Prostate gland (tissue), 2 donors: ENCODE measurements at regions of chr20 and their contacts with region 1.

Region 1: DNA sequence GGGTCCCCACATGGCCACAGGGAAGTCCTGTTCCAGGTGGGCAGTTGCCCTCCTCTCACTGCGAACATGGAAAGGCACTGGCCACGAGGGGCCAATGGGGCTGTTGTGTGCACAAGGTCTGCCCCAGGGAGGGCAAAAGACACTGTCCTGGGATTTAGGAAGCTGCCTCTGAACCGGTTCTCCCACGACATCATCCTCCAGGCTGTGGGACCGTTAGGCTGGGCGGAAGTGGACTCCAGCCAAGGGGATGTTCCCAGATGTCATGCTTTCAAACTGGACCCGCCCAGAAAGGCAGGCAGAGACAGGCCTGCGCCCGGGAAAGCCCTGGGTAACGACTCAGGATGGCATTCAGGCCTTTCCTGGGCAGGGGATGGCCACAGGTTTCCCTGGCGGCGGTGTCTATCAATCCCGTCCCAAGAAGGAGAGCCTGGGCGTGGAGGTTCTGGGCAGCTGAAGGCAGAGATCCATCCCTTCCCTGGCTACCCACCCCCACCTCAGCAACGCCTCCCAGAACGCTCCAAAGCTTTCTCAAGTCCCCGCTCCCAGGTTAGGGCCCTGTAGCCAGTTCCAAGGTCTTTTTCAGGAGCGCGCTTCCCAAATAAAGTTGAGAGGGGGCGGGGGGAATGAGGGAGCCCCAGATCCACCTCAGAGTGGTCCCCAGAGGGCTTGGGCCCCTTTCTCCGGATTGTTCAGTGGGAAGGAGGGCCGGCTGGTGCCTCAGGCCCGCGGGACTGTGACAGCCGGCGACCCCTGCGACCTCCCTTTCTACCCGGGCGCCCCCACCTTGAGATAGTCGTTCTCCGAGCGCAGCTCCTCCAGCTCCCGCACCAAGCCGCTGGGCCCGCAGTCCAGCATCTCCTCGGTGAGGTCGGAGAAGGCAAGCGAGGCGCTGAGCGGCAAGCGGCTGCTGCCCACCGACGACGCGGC is 13.8 kb upstream of the TLDC2 start:
- DNase-seq: peak; percentile 98
- H3K4me3 ChIP-seq: peak overlapping the region; percentile 58 to 64
- H3K27ac ChIP-seq: peak overlapping the region; percentile 93 to 95
- H3K4me1 ChIP-seq: peaks cover 14% of the 10 kb centered on the region
- H3K27me3 ChIP-seq: no peaks in the 10 kb centered on the region
- CTCF ChIP-seq: peak in 1 of 4 experiments; percentile 23
- POLR2A ChIP-seq: peak; percentile 66

Region 2: GRCh38 chr20:36573103-36573794 is 288.9 kb before region 1 on chr20 and contains the start of gene TGIF2:
- intact Hi-C with region 1: loop called (anchors 10 kb)
- DNase-seq: peak; percentile 81
- H3K4me3 ChIP-seq: peak within 1 kb of the TSS; percentile 75 to 88
- H3K27ac ChIP-seq: peak within 1 kb of the TSS; percentile 92 to 94
- H3K4me1 ChIP-seq: peaks cover 2% of the 10 kb centered on the region
- H3K27me3 ChIP-seq: no peaks in the 10 kb centered on the region
- CTCF ChIP-seq: no peak
- POLR2A ChIP-seq: peak; percentile 70
- total RNA-seq, gene TGIF2: 16.7 to 34.8 TPM

Region 3: DNA sequence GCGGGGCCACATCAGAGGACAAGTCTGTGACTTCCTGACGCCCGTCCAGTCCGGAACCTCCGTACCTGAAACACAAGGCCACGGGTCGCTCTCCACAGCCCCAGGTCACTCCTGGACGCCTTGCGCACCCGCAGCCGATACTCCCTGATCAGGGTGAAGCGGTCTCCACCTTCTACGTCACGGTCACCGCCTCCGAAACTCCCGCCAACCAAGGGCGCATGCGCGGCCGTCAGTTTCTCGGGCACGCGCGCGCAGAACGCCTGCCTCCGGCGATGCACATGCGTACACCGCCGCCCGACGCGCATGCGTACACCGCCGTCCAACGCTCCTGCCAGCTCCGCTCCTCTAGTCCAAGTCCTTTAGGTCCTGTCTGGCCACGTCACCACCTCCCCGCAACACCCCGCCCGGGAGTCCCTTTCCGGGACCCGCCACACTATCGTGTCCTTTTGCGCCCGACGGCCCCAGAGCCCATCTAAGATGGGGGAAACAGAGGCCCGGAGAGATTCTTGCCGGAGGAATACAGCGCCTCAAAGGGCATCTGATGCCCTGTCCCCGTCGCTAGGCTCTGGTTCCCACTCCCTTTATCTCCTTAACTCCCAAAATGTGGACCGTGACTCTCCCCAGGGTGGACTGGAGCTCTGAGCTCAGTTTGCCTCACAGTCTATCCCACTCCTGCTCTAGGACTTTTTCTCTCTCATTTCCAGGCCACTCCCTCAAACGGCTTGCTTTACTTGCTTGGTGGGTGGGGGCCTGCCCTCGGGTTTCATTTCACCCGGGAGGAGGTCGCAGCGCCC is 88.3 kb before region 1 on chr20 and contains the start of gene DSN1:
- intact Hi-C with region 1: loop called (anchors 5 kb)
- DNase-seq: peak; percentile 95
- H3K4me3 ChIP-seq: peak within 1 kb of the TSS; percentile 67 to 82
- H3K27ac ChIP-seq: peak within 1 kb of the TSS; percentile 94 to 97
- H3K4me1 ChIP-seq: peaks cover 8% of the 10 kb centered on the region
- H3K27me3 ChIP-seq: no peaks in the 10 kb centered on the region
- CTCF ChIP-seq: peak in 2 of 4 experiments; percentile 11 to 47
- POLR2A ChIP-seq: peak; percentile 81
- total RNA-seq, gene DSN1: 13.0 to 17.1 TPM

Region 4: DNA sequence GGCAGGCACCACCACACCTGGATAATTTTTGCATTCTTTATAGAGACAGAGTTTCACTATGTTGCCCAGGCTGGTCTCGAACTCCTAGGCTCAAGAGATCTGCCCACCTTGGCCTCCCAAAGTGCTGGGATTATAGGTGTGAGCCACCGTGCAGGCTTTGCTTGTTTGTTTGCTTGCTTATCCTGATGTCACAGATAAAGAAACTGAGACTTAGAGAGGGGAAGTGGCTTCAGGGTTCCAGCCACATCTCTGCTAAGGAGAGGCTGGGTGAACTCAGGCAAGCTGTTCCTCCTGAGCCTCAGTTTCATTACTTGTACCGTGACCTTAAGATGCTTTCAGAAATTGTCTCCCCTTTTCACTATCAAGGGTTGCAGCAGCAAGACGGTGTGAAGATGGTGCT is 34.7 kb before region 1 on chr20:
- intact Hi-C with region 1: loop called (anchors 5 kb)
- DNase-seq: no peak
- H3K4me3 ChIP-seq: no peak overlapping the region
- H3K27ac ChIP-seq: no peak overlapping the region
- H3K4me1 ChIP-seq: peaks cover 2% of the 10 kb centered on the region
- H3K27me3 ChIP-seq: no peaks in the 10 kb centered on the region
- CTCF ChIP-seq: no peak
- POLR2A ChIP-seq: no peak

Region 5: GRCh38 chr20:36919715-36920333 is 57.7 kb after region 1 on chr20:
- intact Hi-C with region 1: no loop called
- DNase-seq: peak; percentile 20
- H3K4me3 ChIP-seq: no peak overlapping the region
- H3K27ac ChIP-seq: no peak overlapping the region
- H3K4me1 ChIP-seq: no peaks in the 10 kb centered on the region
- H3K27me3 ChIP-seq: no peaks in the 10 kb centered on the region
- CTCF ChIP-seq: peak; percentile 48 to 85 (median 80)
- POLR2A ChIP-seq: no peak